GM12878 (cell line): ENCODE measurements at regions of chr4 and their contacts with region 1.

Region 1: DNA sequence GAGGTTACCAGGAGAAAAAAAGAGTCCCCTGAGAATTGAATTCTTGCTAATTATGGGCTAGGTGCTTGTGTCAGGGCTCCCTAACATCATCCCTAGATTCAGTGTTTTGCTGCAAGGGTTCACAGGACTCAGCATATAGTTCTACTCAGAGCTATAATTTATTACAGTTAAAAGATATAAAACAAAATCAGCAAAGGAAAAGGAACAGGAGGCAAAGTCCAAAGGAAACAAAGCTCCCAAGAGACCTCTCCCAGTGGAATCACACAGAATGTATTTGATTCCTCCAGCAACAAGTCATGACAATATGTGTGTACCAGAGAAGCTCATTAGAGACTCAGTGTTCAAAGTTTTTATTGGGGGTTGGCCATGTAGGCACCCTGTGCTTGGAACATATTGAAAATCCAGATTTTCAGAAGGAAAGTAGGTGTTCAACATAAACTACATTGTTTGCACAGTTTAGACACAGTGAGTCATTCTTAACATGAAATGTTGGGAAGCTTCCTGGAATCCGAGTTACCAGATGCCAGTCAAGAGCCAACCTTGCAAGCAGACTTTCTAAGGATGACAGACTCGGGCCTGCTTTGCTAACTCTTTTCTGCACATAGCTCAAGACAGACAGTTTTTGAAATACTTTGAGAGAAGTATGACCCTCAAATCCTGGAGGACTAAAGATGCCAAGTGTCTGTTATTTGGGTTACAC is 311.3 kb upstream of the EMCN start:
- DNase-seq: no peak
- ATAC-seq: no peak
- H3K4me3 ChIP-seq: no peak overlapping the region
- H3K27ac ChIP-seq: no peak overlapping the region
- H3K4me1 ChIP-seq: peaks cover 5% of the 10 kb centered on the region
- H3K27me3 ChIP-seq: no peaks in the 10 kb centered on the region
- CTCF ChIP-seq: no peak
- EP300 ChIP-seq: no peak
- POLR2A ChIP-seq: no peak
- RAD21 ChIP-seq: no peak

Region 2: DNA sequence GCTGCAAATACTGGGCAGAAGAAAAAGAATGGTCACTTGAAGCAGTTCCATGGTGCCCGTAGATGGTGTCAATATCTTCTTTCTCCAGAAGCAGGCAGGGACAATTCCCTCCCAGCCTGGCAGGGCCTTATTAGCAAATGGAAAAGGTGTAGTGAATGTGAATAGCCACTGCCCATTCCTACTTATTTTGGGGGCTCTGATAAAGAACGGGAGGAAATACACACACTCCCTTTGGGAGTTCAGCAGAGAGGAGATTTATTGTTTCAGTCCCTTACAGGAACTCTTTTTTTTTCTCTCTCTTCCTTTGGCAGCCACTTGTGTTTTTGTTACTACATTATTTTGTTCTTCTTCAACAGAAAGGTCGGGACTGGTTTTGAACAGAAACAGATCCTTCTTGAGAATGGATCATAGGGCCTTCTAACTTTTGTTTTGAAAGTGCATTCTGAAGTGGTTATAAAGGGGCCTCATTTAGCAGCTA is 311.2 kb before region 1 on chr4 and contains the start of gene EMCN:
- CTCF ChIA-PET with region 1: no interaction called
- POLR2A ChIA-PET with region 1: no interaction called
- RAD21 ChIA-PET with region 1: no interaction called
- SMC1A ChIA-PET with region 1: no interaction called
- in situ Hi-C with region 1: no loop called
- intact Hi-C with region 1: no loop called
- DNase-seq: no peak
- ATAC-seq: no peak
- H3K4me3 ChIP-seq: no peak within 1 kb of the TSS
- H3K27ac ChIP-seq: no peak within 1 kb of the TSS
- H3K4me1 ChIP-seq: no peaks in the 10 kb centered on the region
- H3K27me3 ChIP-seq: no peaks in the 10 kb centered on the region; a peak in 2 of 4 replicates
- CTCF ChIP-seq: no peak
- EP300 ChIP-seq: no peak
- POLR2A ChIP-seq: no peak
- RAD21 ChIP-seq: no peak
- polyA plus RNA-seq, gene EMCN: not detected

Region 3: GRCh38 chr4:100848869-100849268 is 19.7 kb after region 1 on chr4:
- CTCF ChIA-PET with region 1: interaction called, 13 read pairs
- POLR2A ChIA-PET with region 1: no interaction called
- RAD21 ChIA-PET with region 1: interaction called, 7 read pairs
- SMC1A ChIA-PET with region 1: interaction called, 5 read pairs
- in situ Hi-C with region 1: no loop called
- intact Hi-C with region 1: no loop called
- DNase-seq: no peak
- ATAC-seq: peak; percentile 91
- H3K4me3 ChIP-seq: no peak overlapping the region
- H3K27ac ChIP-seq: no peak overlapping the region
- H3K4me1 ChIP-seq: no peaks in the 10 kb centered on the region
- H3K27me3 ChIP-seq: no peaks in the 10 kb centered on the region
- CTCF ChIP-seq: peak; percentile 33 to 45 (median 34); a peak in 4 of 6 replicates
- EP300 ChIP-seq: no peak
- POLR2A ChIP-seq: no peak
- RAD21 ChIP-seq: peak; percentile 50